ENCODE measurements at regions of chr1 and their contacts with region 1.

Region 1: GRCh38 chr1:200620273-200621131 is at the start of gene KIF14:
- DNase-seq: peak; percentile 96
- H3K4me3 ChIP-seq: peak within 1 kb of the TSS; percentile 73
- H3K27ac ChIP-seq: no peak within 1 kb of the TSS
- H3K4me1 ChIP-seq: no peaks in the 10 kb centered on the region
- H3K27me3 ChIP-seq: no peaks in the 10 kb centered on the region
- CTCF ChIP-seq: no peak
- total RNA-seq, gene KIF14: 2.7 to 8.2 TPM

Region 2: DNA sequence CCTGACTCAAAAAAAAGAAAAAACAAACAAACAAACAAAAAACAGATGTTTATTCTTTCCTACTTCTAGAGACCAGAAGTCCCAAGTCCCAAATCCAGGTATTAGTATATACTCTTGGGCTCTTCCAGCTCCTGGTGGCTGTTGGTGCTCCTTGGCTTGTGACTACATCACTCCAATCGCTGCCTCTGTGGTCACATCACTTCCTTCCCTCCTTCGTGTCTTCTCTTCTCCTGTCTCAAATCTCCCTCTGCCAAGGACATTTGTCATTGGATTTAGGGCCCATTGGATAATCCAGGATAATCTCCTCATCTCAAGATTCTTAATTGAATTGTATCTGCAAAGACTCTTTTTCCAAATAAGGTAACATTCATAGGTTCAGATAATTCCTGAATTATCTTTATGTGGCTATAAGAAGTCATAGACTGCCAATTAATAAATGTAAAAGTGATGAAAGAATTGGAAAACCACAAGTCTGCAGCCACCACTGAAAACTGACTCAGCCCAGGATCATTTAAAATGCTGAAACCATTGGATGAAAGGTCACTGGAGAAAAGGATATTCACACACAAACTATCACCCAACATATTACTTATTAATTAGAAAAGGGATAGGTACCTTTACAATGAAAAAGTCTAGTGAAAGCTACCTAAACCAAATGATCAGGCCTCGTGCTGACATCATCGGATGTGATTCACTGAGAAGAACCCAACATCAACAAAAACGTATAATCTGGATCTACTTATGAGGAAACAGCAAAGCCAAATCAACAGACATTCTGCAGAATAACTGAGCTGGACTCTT is 277.8 kb before region 1 on chr1:
- intact Hi-C with region 1: no loop called
- DNase-seq: no peak
- H3K4me3 ChIP-seq: no peak overlapping the region
- H3K27ac ChIP-seq: no peak overlapping the region
- H3K4me1 ChIP-seq: no peaks in the 10 kb centered on the region
- H3K27me3 ChIP-seq: no peaks in the 10 kb centered on the region
- CTCF ChIP-seq: no peak

Region 3: DNA sequence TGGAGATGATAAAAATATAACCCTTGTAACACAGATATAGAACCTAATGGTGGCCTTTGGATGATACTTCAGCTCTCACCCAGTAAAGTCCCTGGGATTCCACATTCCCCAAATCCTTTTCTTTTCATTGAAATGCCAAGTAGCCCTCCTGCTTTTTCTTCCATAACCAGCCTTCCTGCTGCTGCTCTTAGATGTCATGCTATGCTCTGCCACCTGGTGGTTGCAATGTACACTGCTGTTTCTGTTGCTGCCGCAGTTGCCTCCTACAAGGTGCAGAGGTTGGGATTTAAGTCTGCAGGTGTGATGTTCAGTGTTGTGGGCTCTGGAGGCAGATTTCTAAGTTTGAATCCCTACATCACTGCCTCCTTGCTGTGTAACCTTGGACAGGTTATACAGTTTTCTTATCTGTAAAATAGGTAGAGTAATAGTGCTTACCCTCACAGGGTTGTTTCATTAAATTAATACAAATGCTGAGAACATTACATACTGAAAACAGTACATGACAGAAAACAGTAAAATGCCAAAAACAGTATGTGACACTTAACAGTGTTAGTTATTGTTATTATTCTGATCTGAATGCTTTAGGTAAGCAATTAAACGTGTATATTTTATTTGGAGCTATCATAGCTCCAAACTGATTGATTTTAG is 182.5 kb after region 1 on chr1:
- intact Hi-C with region 1: loop called (anchors 2 kb)
- DNase-seq: peak; percentile 83
- H3K4me3 ChIP-seq: no peak overlapping the region
- H3K27ac ChIP-seq: no peak overlapping the region
- H3K4me1 ChIP-seq: no peaks in the 10 kb centered on the region
- H3K27me3 ChIP-seq: no peaks in the 10 kb centered on the region
- CTCF ChIP-seq: peak; percentile 94

Region 4: DNA sequence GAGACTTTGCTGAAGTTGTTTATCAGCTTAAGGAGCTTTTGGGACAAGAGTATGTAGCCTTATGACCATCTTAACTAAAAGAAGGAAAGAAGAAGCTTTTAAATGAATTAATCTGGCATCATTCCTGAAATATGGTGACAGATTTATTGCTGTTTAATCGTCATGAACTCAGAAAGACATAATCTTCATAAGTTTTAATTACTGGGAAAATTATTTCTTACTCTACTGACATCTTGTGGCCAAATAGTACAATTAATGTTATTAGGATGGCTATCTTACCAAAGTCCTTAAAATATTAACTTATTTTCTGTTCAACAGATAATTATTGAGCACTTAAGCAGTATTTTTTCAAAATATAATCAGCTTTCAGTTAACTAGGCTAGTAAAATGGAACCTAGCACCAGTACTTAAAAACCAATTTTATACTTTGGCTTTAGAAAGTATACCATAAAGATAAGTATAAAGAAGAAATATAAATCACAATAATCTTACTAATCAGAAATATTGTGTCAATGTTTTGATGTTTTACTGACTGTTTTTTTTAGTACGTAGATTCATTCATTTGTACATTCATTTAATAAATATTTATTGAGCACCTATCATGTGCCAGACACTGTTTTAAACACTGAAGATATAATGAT is 217.5 kb after region 1 on chr1:
- intact Hi-C with region 1: loop called (anchors 10 kb)
- DNase-seq: no peak
- H3K4me3 ChIP-seq: no peak overlapping the region
- H3K27ac ChIP-seq: no peak overlapping the region
- H3K4me1 ChIP-seq: no peaks in the 10 kb centered on the region
- H3K27me3 ChIP-seq: no peaks in the 10 kb centered on the region
- CTCF ChIP-seq: peak; percentile 39

Region 5: GRCh38 chr1:201042779-201043461 is 422.4 kb after region 1 on chr1:
- intact Hi-C with region 1: loop called (anchors 10 kb)
- DNase-seq: peak; percentile 73
- H3K4me3 ChIP-seq: no peak overlapping the region
- H3K27ac ChIP-seq: no peak overlapping the region
- H3K4me1 ChIP-seq: no peaks in the 10 kb centered on the region
- H3K27me3 ChIP-seq: no peaks in the 10 kb centered on the region
- CTCF ChIP-seq: peak; percentile 88

Measured in colonic mucosa (tissue), 4 donors.